ENCODE measurements at regions of chr3 and their contacts with region 1.

Region 1: GRCh38 chr3:73080216-73080966 is 18.9 kb downstream of the EBLN2 start:
- DNase-seq: no peak
- ATAC-seq: no peak
- H3K4me3 ChIP-seq: no peak overlapping the region
- H3K27ac ChIP-seq: no peak overlapping the region
- H3K4me1 ChIP-seq: no peaks in the 10 kb centered on the region
- H3K27me3 ChIP-seq: no peaks in the 10 kb centered on the region

Region 2: DNA sequence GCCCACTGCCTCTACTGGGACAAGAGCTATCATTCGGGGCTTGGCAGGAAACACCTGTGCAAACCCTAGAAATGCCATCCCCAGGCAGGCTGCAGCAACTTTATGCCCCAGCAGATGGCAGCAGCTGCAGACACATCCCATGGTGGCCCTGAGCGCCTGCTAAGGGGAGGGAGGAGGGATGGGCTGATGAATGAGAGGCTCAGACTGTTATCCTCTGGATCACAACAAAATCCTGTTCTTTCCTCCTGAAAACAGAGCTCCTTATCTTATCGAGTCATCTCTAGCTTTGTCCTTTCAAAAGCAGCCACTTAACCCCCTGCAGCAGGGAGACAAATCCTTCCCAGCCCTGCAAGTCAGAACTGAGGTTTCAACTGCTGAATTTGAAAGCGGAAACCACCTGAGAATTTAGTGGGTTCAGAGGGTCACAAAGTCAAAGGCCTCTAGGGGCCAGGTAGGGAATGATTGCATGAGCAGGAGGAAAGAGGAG is 1204.9 kb before region 1 on chr3:
- intact Hi-C with region 1: loop called (anchors 5 kb)
- DNase-seq: peak; percentile 75 to 89
- ATAC-seq: peak; percentile 91
- H3K4me3 ChIP-seq: no peak overlapping the region
- H3K27ac ChIP-seq: no peak overlapping the region
- H3K4me1 ChIP-seq: no peaks in the 10 kb centered on the region
- H3K27me3 ChIP-seq: no peaks in the 10 kb centered on the region

Region 3: GRCh38 chr3:72447059-72447946 is 633.1 kb before region 1 on chr3:
- intact Hi-C with region 1: no loop called
- DNase-seq: peak; percentile 95 to 98
- ATAC-seq: peak; percentile 96
- H3K4me3 ChIP-seq: peak overlapping the region; percentile 36 to 78
- H3K27ac ChIP-seq: peak overlapping the region in 1 of 2 donors; percentile 52
- H3K4me1 ChIP-seq: no peaks in the 10 kb centered on the region
- H3K27me3 ChIP-seq: no peaks in the 10 kb centered on the region

Region 4: DNA sequence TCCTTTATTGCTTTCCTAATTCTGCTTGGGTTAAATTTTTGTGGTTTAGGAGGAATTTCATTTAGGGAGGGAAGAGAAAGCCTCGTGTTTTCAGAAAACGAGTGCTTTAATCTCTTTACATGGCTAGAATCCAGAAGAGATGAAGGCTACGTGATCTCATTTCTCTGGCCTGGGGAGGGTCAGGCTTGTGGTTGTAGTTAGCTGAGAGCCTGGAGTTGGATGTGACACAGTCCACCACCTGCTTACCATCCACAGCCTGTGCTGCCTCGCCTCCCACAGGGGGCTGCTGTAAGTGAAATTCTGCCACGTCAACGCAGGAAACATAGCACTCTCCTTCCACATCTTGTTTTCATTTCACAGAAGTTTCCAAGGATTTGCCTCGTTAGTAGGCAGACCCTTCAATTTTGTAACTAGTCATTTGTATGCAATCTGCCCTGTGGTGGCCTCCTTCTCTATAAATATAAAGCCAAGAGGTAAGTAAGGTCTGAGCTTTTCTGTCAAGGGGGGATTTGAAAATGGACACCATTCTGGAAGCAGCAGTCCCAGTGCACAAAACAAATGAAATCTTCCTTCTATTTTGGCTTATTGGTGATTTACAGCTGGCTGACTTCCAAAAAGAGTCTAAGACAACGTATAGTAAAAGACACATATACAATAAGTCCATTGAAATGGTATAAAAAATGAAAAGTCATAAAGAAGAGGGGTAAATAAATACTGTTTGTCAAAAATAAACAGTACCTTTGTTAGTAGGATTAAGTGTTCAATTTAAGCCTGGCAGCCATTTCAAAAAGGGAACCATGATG is 189.1 kb before region 1 on chr3:
- intact Hi-C with region 1: no loop called
- DNase-seq: peak in 1 of 2 donors; percentile 71
- ATAC-seq: no peak
- H3K4me3 ChIP-seq: no peak overlapping the region
- H3K27ac ChIP-seq: peak overlapping the region; percentile 6 to 59
- H3K4me1 ChIP-seq: no peaks in the 10 kb centered on the region
- H3K27me3 ChIP-seq: no peaks in the 10 kb centered on the region